Right ventricle myocardium inferior (tissue), 1 donor: ENCODE measurements at regions of chr9 and their contacts with region 1.

Region 1: DNA sequence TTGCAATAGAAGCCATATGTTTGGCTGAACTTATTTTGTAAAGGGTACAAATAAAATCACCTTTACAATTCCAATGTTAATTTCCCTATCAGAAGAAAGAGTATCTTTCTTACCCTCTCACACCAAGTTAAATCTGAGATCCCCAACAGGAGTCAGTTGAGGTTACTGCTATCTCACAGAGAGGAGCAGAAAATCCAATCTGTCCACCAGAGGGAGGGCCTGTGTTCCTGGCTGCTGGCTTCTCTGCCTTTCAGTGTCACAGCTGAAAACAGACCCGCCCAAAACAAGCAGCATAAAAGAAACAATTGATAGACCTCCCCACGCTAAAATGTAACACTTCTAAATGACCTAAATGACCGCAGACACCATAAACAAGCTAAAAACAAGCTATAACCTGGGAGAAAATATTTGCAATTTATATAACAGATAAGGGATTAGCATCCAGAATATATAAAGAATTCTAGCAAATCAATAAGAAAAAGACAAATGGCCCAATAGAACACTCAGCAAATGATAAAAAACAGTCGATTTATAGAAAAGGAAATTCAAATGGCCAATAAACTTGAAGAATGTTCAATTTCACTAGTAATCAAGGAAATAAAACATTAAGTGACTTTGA is 24.5 kb upstream of the MVB12B start:
- DNase-seq: no peak
- ATAC-seq: peak; percentile 80

Region 2: DNA sequence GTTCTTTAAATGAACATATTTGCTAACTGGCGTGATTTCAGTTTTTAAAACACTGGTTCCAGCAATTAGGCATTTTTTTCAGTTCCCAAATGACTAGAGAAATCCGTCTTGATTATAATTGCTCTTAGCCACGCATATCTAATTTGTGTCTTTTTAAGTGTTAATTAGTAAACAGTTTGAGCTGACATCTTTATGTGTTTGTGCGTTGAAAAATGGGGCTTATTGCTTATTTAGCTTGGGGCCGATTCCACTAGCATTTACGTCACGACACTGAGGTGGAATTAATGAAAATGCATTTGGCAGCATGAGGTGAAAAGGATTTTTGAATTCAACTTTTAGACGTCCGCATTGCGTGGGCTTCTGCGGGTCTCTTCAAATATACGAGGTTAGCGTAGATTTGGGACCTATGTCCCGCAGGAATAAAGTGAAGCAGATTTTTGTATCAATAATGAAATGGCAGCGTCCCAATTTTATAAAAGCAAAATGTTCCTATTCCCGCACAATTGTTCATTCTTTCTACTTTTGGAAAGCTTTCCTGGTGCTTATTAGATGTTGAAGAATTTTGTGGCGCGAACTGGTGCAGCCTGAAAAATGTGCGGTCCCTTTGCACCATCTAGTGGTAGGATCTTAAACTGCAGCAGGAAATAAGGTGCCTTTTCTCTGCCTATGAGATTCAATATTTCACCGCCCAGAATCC is 188.9 kb after region 1 on chr9:
- intact Hi-C with region 1: loop called (anchors 2 kb)
- DNase-seq: no peak
- ATAC-seq: peak; percentile 61

Region 3: DNA sequence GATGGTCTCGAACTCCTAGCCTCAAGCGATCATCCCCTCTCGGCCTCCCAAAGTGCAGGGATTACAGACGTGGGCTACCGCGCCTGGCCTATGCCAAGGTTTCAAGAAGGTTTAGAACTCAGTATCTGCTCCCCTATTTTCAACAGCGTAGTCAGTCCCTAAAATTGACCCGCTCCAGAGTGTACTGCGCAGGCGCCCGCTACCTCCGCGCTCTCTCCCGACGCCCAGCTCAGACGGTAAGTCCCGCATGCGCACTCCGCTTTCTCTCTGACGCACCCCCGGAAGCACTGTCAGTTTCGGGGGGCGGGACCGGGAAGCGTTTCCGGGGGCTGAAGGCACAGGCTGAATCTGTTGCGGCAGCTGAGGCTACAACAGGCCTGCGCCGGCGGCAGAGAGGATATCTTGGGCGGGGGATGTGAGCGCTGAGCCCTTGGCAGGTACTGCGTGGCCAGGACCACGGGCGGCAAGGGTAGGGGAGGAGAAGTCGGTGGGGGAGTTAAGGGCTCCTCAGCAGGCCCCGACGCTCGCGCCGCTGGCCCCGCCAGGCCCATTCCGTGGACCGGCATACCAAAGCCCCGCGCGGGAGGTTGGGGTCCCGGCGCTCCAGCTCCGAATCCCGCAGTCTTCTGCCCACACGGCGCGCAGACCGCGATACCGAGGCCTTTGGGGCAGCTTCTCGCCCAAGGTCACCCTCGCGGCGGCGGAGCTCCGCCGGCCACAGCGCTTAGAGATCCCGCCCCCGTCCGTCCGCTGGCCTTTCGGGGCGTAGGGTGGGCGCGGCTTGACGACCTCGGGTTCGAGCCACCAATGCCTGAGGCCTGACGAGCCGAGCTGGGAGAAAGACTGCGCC is 502.8 kb after region 1 on chr9 and contains the start of gene ZBTB43:
- intact Hi-C with region 1: no loop called
- DNase-seq: peak; percentile 98
- ATAC-seq: peak; percentile 94
- total RNA-seq, gene ZBTB43: 35.1 TPM